ENCODE measurements at regions of chr7 and their contacts with region 1.

Region 1: DNA sequence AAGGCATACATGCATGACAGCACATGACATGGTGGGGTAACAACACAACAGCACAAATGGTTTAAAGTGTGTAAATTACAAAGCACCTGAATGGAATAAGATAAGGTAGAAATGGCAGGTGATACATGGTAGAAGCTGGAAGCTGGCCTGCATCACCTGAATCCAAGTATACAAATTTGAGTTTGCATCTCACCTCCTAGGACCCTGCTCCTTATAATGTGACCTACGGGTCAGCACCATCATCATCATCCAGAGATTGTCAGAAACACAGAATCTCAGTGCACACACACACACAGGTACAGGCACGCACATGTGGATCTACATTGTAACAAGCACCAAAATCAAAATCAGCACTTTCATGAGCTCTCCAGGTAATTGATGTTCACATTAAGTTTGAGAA is 1048.2 kb upstream of the AUTS2 start:
- DNase-seq: no peak
- H3K4me3 ChIP-seq: no peak overlapping the region
- H3K27ac ChIP-seq: no peak overlapping the region
- H3K4me1 ChIP-seq: no peaks in the 10 kb centered on the region
- H3K27me3 ChIP-seq: no peaks in the 10 kb centered on the region
- CTCF ChIP-seq: no peak
- POLR2A ChIP-seq: no peak

Region 2: GRCh38 chr7:68364886-68365625 is 185.0 kb before region 1 on chr7:
- intact Hi-C with region 1: no loop called
- DNase-seq: no peak
- H3K4me3 ChIP-seq: no peak overlapping the region
- H3K27ac ChIP-seq: no peak overlapping the region
- H3K4me1 ChIP-seq: no peaks in the 10 kb centered on the region
- H3K27me3 ChIP-seq: peaks cover 0 to 8% (median 0%) of the 10 kb centered on the region in 7 donors
- CTCF ChIP-seq: no peak
- POLR2A ChIP-seq: no peak

Region 3: DNA sequence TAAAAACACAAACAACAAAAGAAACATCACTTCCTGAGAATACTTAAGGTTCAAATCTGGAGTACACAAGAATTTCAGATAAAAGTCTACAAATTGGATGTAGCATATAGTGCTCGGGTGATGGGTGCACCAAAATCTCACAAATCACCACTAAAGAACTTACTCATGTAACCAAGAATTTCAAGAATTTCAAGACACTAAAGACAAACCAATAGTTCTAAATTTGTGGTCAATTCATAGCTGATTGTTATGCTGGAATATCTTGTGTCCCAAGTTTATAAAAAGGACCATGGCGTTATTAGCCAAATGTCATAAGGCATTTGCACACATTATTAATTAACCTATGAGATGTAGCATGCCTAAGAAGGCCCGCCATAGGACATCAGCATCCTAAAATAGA is 155.9 kb before region 1 on chr7:
- intact Hi-C with region 1: no loop called
- DNase-seq: no peak
- H3K4me3 ChIP-seq: no peak overlapping the region
- H3K27ac ChIP-seq: no peak overlapping the region
- H3K4me1 ChIP-seq: no peaks in the 10 kb centered on the region
- H3K27me3 ChIP-seq: no peaks in the 10 kb centered on the region
- CTCF ChIP-seq: no peak
- POLR2A ChIP-seq: no peak

Region 4: DNA sequence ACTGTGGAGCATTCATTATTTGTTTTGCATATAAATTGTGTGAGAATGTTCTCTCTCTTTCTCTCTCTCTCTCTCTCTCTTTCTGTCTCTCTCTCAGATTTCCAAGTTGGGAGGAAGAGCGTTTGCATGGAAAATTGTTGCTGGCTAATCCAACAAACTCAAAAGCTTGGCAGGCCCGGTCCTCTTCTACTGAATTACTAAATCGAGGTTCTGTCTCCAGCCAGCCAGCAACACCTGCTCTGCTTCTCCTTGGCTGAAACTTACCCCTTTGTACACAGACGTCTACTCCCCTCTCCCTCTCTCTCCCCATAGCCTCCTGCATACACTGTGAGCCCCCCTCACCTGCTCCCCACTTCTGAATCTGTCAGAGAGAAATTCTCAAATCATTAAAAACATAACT is 51.8 kb after region 1 on chr7:
- intact Hi-C with region 1: loop called (anchors 5 kb)
- DNase-seq: no peak
- H3K4me3 ChIP-seq: no peak overlapping the region
- H3K27ac ChIP-seq: no peak overlapping the region
- H3K4me1 ChIP-seq: no peaks in the 10 kb centered on the region
- H3K27me3 ChIP-seq: no peaks in the 10 kb centered on the region
- CTCF ChIP-seq: no peak
- POLR2A ChIP-seq: no peak

Region 5: GRCh38 chr7:68613405-68613804 is 63.4 kb after region 1 on chr7:
- intact Hi-C with region 1: no loop called
- DNase-seq: no peak
- H3K4me3 ChIP-seq: no peak overlapping the region
- H3K27ac ChIP-seq: no peak overlapping the region
- H3K4me1 ChIP-seq: no peaks in the 10 kb centered on the region
- H3K27me3 ChIP-seq: no peaks in the 10 kb centered on the region
- CTCF ChIP-seq: no peak
- POLR2A ChIP-seq: no peak

Measured in spleen (tissue), 13 donors.